PC-3 (cell line): ENCODE measurements at regions of chr18 and their contacts with region 1.

Region 1: DNA sequence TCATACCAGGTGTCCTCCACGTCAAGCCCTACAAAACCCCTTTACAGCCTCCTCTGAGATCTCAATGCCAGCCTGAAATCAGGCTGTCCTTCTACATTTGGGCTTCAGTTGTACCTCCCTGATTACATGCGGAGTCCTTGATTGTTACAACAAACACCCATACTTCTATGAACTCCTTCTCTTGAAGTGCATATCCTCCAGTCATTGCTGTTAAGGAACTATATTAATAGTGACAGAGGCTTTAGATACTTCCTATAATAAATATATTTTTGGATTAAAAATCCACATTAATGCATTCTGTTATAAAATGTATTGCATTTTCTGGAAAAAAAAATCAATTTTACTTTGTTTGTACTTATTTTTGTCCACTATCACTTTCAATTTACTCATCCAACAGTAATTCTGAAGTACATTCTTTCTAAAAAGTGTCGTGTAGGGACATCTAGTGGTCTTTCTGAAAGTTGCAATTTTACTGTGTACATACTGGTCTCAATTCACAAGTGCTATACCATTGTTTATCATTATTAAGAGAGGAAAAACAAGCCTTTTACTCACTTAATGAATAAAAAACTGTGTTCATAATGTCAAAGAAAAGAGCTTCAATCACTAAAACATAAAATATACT is 316.4 kb downstream of the DSEL start:
- DNase-seq: peak; percentile 80
- ATAC-seq: peak; percentile 84
- H3K4me3 ChIP-seq: no peak overlapping the region
- H3K27ac ChIP-seq: no peak overlapping the region
- H3K4me1 ChIP-seq: no peaks in the 10 kb centered on the region
- H3K27me3 ChIP-seq: no peaks in the 10 kb centered on the region
- CTCF ChIP-seq: peak; percentile 74

Region 2: DNA sequence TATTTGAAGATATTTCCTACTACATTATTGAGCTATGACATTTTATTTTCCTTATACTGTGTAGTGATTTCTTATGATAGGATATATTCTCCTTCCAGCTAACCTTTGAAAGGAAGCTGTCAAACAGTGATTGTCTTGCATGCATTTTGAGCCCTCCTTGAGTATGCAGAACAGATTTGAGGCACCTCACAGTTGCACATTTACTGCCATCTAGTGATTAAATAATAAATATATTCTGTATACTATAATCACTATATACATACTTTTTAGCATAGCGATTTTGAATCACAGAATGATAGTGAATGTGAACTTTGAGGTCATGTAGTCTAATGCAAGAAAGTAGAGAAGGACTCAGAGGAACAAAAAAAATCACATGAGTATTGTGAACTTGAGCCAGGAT is 327.8 kb before region 1 on chr18:
- CTCF ChIA-PET with region 1: no interaction called
- POLR2A ChIA-PET with region 1: no interaction called
- intact Hi-C with region 1: loop called (anchors 10 kb)
- DNase-seq: peak; percentile 40
- ATAC-seq: peak; percentile 79
- H3K4me3 ChIP-seq: no peak overlapping the region
- H3K27ac ChIP-seq: no peak overlapping the region
- H3K4me1 ChIP-seq: no peaks in the 10 kb centered on the region
- H3K27me3 ChIP-seq: no peaks in the 10 kb centered on the region
- CTCF ChIP-seq: peak; percentile 50

Region 3: DNA sequence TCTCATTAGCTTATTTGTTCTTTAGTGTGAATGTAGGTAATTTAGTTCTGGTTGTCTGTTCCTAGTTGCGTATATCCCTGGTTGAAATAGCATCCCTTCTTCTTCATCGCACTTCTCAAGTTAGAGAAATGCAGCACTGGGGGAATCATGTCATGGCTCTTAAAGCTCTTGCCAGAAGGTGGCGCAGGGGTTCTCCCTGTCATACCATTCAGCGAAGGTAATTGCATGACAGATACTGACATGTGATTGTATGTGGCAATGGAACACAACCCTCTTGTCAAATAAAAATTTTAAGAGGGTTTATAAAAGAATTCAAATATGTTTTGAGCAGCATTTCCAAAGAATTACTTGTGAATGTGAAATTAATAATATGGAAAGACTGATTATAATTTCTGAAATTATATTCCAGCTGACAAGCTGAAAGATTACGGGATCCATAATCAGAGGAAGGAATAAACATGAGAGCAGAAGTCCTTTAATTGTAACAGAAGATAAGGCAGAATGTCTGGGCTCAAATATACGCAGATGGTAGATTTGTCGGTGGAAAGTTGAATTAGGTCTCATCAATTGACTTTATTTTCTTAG is 95.3 kb before region 1 on chr18:
- CTCF ChIA-PET with region 1: interaction called, 5 read pairs
- POLR2A ChIA-PET with region 1: no interaction called
- intact Hi-C with region 1: loop called (anchors 1 kb)
- DNase-seq: peak; percentile 80
- ATAC-seq: peak; percentile 96
- H3K4me3 ChIP-seq: no peak overlapping the region
- H3K27ac ChIP-seq: no peak overlapping the region
- H3K4me1 ChIP-seq: no peaks in the 10 kb centered on the region
- H3K27me3 ChIP-seq: no peaks in the 10 kb centered on the region
- CTCF ChIP-seq: peak; percentile 91